B cell (primary cell): ENCODE measurements at regions of chr11 and their contacts with region 1.

Region 1: DNA sequence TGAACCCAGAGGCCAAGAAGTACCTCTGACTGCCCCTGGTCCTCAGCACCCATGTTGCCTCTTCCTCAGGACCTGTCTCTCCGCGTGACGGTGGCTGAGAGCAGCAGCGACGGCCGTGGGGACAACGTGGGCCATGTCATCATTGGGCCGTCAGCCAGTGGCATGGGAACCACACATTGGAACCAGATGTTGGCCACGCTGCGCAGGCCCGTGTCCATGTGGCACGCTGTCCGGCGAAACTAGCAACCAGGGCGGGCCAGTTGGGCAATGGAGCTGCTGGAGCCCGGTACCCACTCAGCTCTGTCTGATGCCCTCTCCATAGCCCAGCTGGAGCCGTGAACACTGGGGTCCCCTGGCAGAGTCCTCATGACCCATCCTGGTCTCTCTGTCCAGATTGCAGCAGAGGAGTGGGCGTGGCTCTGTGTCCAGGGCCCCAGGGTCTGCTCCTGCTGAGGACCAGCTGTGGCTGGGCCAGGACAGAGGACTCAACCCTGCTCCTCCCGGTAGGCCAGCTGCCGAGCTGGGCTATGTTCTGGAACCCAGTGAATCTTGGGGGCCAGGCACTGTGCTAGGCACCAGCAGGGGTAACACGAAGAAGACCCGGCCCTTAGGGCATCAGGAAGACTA is 8.0 kb upstream of the RHOD start:
- DNase-seq: no peak
- ATAC-seq: no peak
- H3K4me3 ChIP-seq: no peak overlapping the region
- H3K4me3 Mint-ChIP-seq: no peak overlapping the region
- H3K27ac ChIP-seq: no peak overlapping the region
- H3K27ac Mint-ChIP-seq: no peak overlapping the region
- H3K4me1 ChIP-seq: peaks cover 0 to 8% of the 10 kb centered on the region in 2 donors
- H3K4me1 Mint-ChIP-seq: peaks cover 8% of the 10 kb centered on the region
- H3K27me3 ChIP-seq: peaks cover 0 to 47% (median 10%) of the 10 kb centered on the region in 4 experiments
- H3K27me3 Mint-ChIP-seq: peaks cover 32% of the 10 kb centered on the region
- CTCF ChIP-seq: no peak

Region 2: DNA sequence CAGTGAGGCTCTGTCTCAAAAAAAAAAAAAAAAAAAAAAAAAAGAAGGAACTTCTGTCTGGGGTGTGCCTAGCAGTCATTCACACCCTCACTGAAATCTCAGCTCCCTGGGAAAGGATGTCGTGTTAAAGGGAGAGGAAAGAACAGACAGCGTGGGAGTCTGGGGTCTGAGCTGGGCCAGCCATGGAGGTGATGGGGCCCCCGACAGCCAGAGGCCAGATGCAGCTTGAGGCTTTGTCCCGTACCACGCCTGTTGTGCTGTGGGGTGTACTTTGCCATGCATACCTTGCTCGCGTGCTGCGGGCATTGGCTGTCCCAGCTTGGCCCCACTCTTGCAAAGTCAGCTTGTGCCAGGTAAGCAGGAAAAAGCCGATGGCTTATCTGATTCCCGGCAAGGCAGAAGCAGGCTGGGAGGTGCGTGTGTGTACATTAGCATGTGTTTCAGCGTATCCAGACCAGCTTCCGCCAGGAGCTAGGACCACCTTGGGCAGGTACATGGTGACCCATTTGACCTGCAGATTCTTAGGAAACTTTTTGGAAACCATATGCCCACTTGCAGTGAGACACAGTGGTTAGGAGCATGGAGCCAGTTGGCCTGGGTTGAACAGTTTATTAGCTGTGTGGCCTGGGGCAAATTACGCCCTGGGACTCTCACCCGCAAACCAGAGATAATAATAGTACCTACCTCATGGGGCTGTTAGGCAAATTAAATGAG is 21.0 kb before region 1 on chr11:
- CTCF ChIA-PET with region 1: interaction called, 3 read pairs
- POLR2A ChIA-PET with region 1: interaction called, 10 read pairs
- intact Hi-C with region 1: no loop called
- DNase-seq: peak; percentile 69
- ATAC-seq: peak; percentile 68
- H3K4me3 ChIP-seq: peak overlapping the region in 1 of 5 experiments; percentile 9
- H3K4me3 Mint-ChIP-seq: peak overlapping the region; percentile 12
- H3K27ac ChIP-seq: no peak overlapping the region
- H3K27ac Mint-ChIP-seq: peak overlapping the region; percentile 15
- H3K4me1 ChIP-seq: peaks cover 53 to 64% of the 10 kb centered on the region in 2 donors
- H3K4me1 Mint-ChIP-seq: peaks cover 53% of the 10 kb centered on the region
- H3K27me3 ChIP-seq: peaks cover 0 to 83% (median 39%) of the 10 kb centered on the region in 4 experiments
- H3K27me3 Mint-ChIP-seq: peaks cover 39% of the 10 kb centered on the region
- CTCF ChIP-seq: no peak